RWPE1 (cell line): ENCODE measurements at regions of chr7 and their contacts with region 1.

Region 1: DNA sequence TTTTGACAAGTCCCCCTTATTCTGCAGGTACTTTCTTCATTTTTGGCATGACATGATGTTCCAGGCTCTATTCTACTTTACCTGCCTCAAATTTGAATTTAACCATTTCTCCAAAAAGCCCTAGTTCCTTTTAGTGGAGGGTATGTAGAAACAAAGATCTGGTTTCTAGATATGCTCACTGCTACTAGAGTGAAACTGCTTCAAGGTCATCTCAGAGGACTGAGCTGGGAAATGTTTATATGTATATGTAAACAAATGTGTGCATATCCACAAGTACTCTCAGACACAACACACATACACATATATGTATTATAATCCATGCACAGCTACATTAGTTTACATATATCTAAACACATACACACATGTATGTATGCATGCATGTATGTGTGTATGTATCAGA is 69.1 kb downstream of the ICA1 start:
- DNase-seq: no peak
- H3K27ac ChIP-seq: no peak overlapping the region
- CTCF ChIP-seq: no peak

Region 2: GRCh38 chr7:7739204-7740036 is 453.5 kb before region 1 on chr7:
- CTCF ChIA-PET with region 1: interaction called, 11 read pairs
- POLR2A ChIA-PET with region 1: no interaction called
- DNase-seq: no peak
- H3K27ac ChIP-seq: no peak overlapping the region
- CTCF ChIP-seq: no peak